GM23248 (cell line): ENCODE measurements at regions of chr1 and their contacts with region 1.

Region 1: GRCh38 chr1:197173571-197174482 is 27.4 kb upstream of the ASPM start:
- DNase-seq: peak; percentile 17
- H3K4me3 ChIP-seq: no peak overlapping the region
- H3K27ac ChIP-seq: no peak overlapping the region
- H3K4me1 ChIP-seq: peaks cover 14% of the 10 kb centered on the region
- H3K27me3 ChIP-seq: no peaks in the 10 kb centered on the region

Region 2: GRCh38 chr1:196853406-196853805 is 320.4 kb before region 1 on chr1:
- in situ Hi-C with region 1: loop called (anchors 25 kb)
- DNase-seq: no peak
- H3K4me3 ChIP-seq: no peak overlapping the region
- H3K27ac ChIP-seq: no peak overlapping the region
- H3K4me1 ChIP-seq: no peaks in the 10 kb centered on the region
- H3K27me3 ChIP-seq: no peaks in the 10 kb centered on the region

Region 3: DNA sequence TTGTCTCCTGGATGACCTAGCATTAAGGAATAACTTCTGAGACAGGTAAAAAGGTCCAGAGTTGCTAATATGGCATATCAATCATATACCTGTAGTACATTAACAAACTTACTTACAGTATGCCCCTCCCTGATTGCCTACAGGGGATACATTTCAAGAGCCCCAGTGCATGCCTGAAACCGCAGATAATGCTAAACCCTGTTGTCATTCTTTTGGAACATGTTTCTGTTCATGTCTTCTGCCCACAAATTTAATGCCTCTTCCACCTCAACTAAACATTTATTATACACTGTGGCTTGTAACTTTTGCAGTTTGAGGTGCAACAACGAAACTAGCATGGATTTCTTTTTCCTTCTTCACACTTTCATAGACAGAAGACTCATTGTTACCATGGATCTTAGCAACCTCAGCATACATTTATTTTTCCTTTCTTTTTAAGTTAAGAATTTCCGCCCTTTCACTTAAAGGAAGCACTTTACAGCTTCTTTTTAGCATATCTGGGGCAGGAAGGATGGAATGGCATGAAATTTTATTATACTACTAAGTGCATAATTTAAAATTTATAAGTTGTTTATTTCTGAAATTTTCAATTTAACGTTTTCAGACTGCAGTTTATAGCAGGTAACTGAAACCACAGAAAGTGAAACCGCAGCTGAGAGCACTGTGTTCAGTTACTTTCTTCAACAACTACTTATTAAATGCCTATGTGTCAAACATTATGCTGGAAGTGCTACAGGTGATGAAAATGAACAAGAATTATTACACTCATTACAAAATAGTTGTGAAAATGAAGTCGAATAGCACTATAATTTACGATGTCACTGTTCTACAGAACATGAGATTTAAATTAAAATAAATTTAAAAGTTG is 132.1 kb before region 1 on chr1:
- in situ Hi-C with region 1: no loop called
- DNase-seq: no peak
- H3K4me3 ChIP-seq: no peak overlapping the region
- H3K27ac ChIP-seq: no peak overlapping the region
- H3K4me1 ChIP-seq: peaks cover 10% of the 10 kb centered on the region; the same call in 1 of the 2 replicates
- H3K27me3 ChIP-seq: no peaks in the 10 kb centered on the region

Region 4: DNA sequence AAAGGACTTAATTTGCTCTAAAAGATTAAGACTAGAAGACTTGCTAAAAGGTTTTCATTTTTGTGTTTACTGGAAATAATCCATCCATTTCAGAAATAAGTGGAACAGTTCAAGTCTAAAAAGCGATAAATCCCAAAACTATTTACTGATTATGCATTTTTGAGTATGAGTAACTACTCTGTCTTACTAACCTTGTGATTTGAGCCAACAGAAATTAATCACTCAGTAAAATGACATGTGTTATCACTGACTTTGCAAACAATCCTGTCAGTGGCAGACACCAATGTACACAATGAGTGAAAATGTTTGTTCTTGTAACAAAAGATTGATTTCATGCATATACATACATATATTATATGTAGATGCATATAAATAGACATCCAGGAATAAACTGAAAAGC is 383.5 kb after region 1 on chr1:
- in situ Hi-C with region 1: no loop called
- DNase-seq: peak; percentile 31
- H3K4me3 ChIP-seq: no peak overlapping the region
- H3K27ac ChIP-seq: no peak overlapping the region
- H3K4me1 ChIP-seq: peaks cover 8% of the 10 kb centered on the region
- H3K27me3 ChIP-seq: no peaks in the 10 kb centered on the region

Region 5: DNA sequence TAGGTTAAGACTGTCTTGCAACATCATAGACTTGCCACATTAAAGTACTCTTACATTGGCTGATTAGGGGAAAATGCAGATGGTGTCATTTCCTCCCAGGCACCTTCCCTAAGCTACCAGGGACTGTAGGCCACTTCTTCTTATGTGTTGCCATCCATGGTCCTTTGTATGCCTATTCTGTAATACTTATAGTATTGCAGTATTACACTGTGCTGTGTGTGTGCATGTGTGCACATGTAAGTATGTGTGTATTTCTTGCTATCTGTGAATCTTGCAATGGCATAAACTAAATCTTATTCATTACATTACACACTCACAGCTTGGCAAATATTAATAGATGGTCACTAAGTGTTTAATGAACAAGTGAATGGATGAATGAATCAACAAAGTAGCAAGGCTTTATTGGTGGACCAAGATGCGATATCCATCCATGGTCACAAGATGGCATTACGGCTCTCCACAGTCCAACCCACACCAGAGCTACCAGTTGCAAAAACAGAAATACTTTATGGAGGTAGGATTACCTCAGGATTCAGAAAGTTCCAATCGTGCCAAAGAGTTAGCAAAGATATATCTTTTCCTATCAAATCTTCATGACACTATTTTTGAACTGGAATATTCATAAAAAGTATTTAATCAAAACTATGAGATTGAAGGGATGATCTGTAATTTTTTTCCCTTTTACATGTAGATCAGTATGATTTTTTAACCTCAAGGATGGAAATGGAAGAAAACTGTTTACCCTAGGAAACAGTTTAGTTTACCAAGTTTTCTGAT is 441.3 kb after region 1 on chr1:
- in situ Hi-C with region 1: no loop called
- DNase-seq: peak; percentile 71
- H3K4me3 ChIP-seq: no peak overlapping the region
- H3K27ac ChIP-seq: no peak overlapping the region
- H3K4me1 ChIP-seq: no peaks in the 10 kb centered on the region
- H3K27me3 ChIP-seq: no peaks in the 10 kb centered on the region